MCF 10A (cell line): ENCODE measurements at regions of chr20 and their contacts with region 1.

Region 1: GRCh38 chr20:24933266-24933908 is 15.7 kb upstream of the CST7 start:
- DNase-seq: no peak
- H3K4me3 Mint-ChIP-seq: no peak overlapping the region
- H3K27ac Mint-ChIP-seq: no peak overlapping the region
- H3K4me1 Mint-ChIP-seq: peaks cover 15% of the 10 kb centered on the region
- H3K27me3 Mint-ChIP-seq: no peaks in the 10 kb centered on the region
- CTCF ChIP-seq: no peak

Region 2: DNA sequence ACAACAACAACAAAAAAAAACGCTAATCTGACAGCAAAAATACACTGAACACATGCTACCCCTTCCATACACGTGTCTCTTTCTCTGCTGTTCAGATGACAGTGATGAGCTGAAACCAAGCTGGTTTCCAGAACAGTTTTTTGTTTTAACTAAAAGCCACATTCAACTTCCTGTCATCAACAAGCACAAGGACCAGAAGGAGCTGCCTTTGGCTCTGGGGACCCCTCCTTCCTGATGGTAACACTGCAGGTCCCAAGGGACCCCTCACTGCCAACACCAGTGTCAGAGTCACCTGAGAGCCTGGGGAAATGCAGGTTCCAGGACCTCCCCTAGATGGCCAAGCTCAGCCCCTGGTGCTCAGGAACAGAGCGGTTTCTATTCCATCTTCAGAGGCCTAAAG is 21.7 kb after region 1 on chr20:
- CTCF ChIA-PET with region 1: interaction called, 38 read pairs
- POLR2A ChIA-PET with region 1: no interaction called
- intact Hi-C with region 1: no loop called
- DNase-seq: no peak
- H3K4me3 Mint-ChIP-seq: no peak overlapping the region
- H3K27ac Mint-ChIP-seq: no peak overlapping the region
- H3K4me1 Mint-ChIP-seq: no peaks in the 10 kb centered on the region
- H3K27me3 Mint-ChIP-seq: no peaks in the 10 kb centered on the region
- CTCF ChIP-seq: no peak

Region 3: GRCh38 chr20:24970754-24971153 is 37.4 kb after region 1 on chr20:
- CTCF ChIA-PET with region 1: no interaction called
- POLR2A ChIA-PET with region 1: no interaction called
- intact Hi-C with region 1: no loop called
- DNase-seq: no peak
- H3K4me3 Mint-ChIP-seq: no peak overlapping the region
- H3K27ac Mint-ChIP-seq: no peak overlapping the region
- H3K4me1 Mint-ChIP-seq: no peaks in the 10 kb centered on the region
- H3K27me3 Mint-ChIP-seq: no peaks in the 10 kb centered on the region
- CTCF ChIP-seq: no peak